HEK293T (cell line): ENCODE measurements at regions of chr19 and their contacts with region 1.

Region 1: GRCh38 chr19:42440357-42441048 is 2.2 kb downstream of the CXCL17 start:
- DNase-seq: peak; percentile 80

Region 2: DNA sequence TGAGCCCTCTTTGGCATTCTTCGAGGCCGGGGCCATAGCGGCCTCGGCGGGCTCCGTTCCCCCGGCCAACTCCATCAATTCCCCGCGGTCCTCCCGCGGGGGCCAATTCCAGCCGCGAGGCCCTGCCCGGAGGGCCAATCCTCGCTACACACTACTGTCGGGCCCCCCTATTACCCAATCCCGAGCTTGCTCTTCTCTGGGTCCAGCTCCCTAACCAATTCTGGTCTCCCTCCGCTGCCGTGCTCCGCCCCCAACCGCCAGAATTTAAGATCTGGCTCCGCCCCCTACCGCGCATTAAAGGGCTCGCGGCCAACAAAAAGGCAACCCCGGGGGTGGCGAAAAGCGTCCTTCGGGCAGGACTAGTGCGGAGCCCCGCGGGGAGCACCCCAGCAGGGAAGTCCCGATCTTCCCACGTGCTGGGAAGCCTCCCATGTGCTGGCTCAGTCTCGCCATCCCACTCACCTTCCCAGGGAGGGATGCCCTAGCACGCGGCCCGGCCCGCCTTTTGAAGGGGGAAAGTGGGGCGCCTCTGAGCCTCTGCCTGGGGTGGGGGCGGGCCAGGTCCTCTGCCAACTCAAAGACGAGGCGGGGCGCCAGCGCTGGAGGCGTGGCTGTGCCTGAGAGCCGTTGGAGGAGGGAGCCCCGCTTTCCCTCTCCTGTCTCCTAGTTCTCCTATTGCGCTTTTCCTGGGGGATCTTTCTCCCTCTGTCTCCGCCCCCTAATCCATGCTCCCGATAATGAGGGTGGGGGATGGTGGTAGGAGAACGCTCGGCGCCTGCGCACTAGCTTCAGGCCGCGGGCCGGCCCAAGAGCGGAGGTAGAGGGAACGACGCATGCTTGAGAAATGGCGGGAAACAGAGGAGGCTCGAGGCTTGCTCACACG is 16.8 kb before region 1 on chr19:
- CTCF ChIA-PET with region 1: interaction called, 12 read pairs
- POLR2A ChIA-PET with region 1: interaction called, 3 read pairs
- DNase-seq: peak; percentile 82

Region 3: DNA sequence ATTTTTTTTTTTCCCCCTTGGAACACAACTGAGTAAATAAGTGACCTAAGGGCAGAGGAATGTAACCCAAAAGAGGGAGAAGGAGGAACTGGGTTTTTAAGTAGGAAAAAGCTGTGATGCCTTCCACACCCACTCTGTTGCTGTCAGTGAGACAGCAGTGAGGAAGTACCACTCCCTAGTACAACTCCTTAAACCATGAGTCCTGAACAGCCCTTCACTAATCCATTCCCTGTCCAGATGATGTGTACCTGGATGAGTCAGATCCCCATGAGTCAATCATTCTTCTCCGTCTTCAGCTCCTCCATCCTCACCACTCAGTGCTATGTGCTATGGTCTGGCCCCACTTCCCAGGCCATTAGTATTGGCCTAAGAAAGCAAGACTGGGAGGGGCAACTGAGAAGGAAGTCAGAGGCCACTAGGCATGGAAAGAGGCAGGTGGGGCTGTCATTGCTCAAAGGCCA is 15.1 kb after region 1 on chr19:
- CTCF ChIA-PET with region 1: interaction called, 14 read pairs
- POLR2A ChIA-PET with region 1: no interaction called
- DNase-seq: no peak

Region 4: DNA sequence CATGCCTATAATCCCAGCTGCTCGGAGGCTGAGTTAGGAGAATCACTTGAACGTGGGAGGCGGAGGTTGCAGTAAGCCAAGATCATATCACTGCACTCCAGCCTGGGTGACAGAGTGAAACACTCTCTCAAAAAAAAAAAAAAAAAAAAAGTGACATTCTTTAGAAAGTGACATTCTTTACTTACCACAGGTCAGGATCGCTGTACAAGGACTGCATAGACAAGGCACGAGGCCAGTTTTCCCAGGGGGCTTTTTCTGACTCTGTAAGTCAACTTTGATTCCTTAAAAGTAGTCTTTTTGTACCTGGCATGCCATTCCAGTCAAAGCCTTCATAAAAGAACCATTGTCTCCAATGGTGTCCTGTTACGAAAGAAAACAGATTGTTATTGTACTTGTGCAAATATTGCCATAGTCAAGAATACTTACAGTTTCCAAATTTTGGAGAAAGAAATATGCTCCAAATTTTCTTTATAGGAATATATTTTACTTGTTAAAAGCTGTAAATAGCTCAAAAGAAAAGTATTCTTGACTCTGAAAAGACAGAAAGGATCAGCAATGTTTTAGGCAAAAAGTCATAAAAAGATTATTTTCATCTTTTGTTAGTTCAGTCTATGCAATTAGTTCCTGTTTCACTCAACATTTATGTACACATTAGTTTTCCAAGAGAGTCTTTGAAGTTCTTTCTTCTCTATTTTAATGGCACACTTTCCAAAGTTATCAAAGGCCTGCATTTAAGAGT is 48.4 kb after region 1 on chr19:
- CTCF ChIA-PET with region 1: no interaction called
- POLR2A ChIA-PET with region 1: no interaction called
- DNase-seq: no peak

Region 5: GRCh38 chr19:42577016-42577415 is 136.5 kb after region 1 on chr19:
- CTCF ChIA-PET with region 1: no interaction called
- POLR2A ChIA-PET with region 1: no interaction called
- DNase-seq: no peak